ENCODE measurements at regions of chr2 and their contacts with region 1.

Region 1: DNA sequence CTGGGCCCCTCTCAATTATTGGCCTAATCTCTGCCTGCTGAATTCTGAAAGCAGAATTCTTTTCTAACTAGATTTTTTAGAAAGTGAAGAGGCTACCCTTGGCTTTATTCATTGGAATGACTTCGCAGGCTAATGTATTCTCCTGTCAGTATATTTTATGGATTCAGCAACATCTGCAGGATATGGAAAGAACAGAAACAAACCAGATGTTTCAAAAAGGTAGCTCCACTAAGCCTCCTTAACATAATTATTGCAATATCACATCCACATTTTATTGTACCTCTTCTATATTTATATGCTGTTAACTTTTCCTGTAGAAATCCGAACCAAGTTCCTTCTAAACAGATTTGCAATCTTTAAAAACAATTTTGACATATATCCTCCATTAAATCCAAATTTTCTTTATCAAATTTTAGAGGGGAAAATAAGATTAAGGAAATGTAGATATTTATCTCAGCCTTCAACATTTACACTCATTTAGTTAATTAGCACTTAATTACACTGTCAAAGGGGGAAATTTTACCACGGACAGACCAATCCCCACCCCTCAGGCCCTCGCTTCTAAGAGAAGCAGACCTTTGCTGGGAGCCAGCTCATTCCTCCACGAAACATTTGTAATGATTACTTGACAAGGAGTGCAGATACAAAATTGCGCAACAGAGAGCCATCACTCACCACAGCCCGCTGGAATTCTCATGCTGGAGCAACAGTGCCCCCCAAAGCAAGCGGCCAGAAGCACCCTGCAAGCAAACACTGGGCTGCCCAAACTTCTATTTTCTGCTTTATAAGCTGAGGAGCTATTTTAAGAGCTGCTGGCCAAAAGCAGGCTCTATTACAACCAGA is 253.4 kb downstream of the ETAA1 start:
- DNase-seq: peak; percentile 96
- H3K4me3 ChIP-seq: peak overlapping the region in 1 of 4 donors; percentile 0
- H3K27ac ChIP-seq: peak overlapping the region; percentile 75 to 81 (median 76)
- H3K4me1 ChIP-seq: peaks cover 21 to 45% (median 38%) of the 10 kb centered on the region in 4 donors
- H3K27me3 ChIP-seq: no peaks in the 10 kb centered on the region
- CTCF ChIP-seq: peak; percentile 78 to 82 (median 81)
- EP300 ChIP-seq: no peak
- POLR2A ChIP-seq: no peak

Region 2: DNA sequence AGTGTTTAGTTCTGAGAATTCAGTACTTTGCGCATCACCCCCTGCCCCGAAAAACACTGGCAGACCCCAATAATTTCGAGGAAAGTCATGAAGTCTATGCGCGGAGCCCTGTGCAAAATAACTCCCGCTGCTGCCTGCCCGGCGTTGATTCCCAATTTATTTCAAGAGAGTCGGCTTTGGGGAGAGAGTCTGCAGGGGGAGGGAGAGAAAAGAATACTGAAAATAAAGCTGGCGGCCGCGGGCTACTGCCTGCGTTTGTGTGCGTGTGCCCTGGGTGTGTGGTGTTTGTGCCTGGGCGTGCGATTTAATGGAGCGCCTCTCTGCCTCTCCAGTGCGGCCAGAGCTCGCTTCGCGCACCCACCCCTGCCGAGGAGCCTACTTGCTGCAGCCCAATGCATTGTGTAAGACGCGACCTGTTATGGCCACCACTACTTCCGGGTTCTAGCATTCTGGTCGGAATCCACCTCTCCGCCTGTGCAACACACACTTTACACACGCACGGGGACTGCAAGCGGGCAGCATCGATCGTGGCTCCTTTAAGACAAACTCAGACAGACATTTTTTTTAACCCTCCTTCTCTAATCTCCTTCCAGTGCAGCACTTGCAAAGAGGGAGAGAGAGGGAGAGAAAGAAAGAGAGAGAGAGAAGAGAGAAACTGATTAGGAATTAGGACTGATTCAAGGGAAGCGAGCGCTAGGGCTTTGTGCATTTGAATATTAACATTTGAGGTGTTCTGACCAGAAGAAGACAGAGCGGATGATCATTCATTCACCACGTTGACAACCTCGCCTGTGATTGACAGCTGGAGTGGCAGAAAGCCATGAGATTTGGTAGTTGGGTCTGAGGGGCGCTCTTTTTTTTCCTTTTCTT is 1215.6 kb before region 1 on chr2 and contains the start of gene MEIS1:
- intact Hi-C with region 1: loop called (anchors 5 kb)
- DNase-seq: peak; percentile 98
- H3K4me3 ChIP-seq: peak within 1 kb of the TSS; percentile 77 to 85 (median 80)
- H3K27ac ChIP-seq: peak within 1 kb of the TSS; percentile 86 to 98 (median 93)
- H3K4me1 ChIP-seq: peaks cover 0 to 31% (median 22%) of the 10 kb centered on the region in 4 donors
- H3K27me3 ChIP-seq: no peaks in the 10 kb centered on the region
- CTCF ChIP-seq: peak in 1 of 3 experiments; percentile 11
- EP300 ChIP-seq: no peak
- POLR2A ChIP-seq: peak; percentile 73
- total RNA-seq, gene MEIS1: 89.8 to 166 (median 132) TPM

Region 3: GRCh38 chr2:66699793-66700676 is 950.5 kb before region 1 on chr2:
- intact Hi-C with region 1: loop called (anchors 10 kb)
- DNase-seq: no peak
- H3K4me3 ChIP-seq: peak overlapping the region in 2 of 4 donors; percentile 6 to 8
- H3K27ac ChIP-seq: peak overlapping the region; percentile 78 to 85 (median 84)
- H3K4me1 ChIP-seq: peaks cover 0 to 75% (median 70%) of the 10 kb centered on the region in 4 donors
- H3K27me3 ChIP-seq: no peaks in the 10 kb centered on the region
- CTCF ChIP-seq: no peak
- EP300 ChIP-seq: no peak
- POLR2A ChIP-seq: no peak

Region 4: GRCh38 chr2:67397143-67397986 is 253.1 kb before region 1 on chr2 and contains the start of gene ETAA1:
- intact Hi-C with region 1: loop called (anchors 10 kb)
- DNase-seq: peak; percentile 97
- H3K4me3 ChIP-seq: peak within 1 kb of the TSS; percentile 70 to 98 (median 98)
- H3K27ac ChIP-seq: peak within 1 kb of the TSS; percentile 90 to 96 (median 93)
- H3K4me1 ChIP-seq: peaks cover 7 to 38% (median 32%) of the 10 kb centered on the region in 4 donors
- H3K27me3 ChIP-seq: no peaks in the 10 kb centered on the region
- CTCF ChIP-seq: no peak
- EP300 ChIP-seq: no peak
- POLR2A ChIP-seq: peak; percentile 74
- total RNA-seq, gene ETAA1: 10.4 to 19.5 (median 14.2) TPM

Region 5: DNA sequence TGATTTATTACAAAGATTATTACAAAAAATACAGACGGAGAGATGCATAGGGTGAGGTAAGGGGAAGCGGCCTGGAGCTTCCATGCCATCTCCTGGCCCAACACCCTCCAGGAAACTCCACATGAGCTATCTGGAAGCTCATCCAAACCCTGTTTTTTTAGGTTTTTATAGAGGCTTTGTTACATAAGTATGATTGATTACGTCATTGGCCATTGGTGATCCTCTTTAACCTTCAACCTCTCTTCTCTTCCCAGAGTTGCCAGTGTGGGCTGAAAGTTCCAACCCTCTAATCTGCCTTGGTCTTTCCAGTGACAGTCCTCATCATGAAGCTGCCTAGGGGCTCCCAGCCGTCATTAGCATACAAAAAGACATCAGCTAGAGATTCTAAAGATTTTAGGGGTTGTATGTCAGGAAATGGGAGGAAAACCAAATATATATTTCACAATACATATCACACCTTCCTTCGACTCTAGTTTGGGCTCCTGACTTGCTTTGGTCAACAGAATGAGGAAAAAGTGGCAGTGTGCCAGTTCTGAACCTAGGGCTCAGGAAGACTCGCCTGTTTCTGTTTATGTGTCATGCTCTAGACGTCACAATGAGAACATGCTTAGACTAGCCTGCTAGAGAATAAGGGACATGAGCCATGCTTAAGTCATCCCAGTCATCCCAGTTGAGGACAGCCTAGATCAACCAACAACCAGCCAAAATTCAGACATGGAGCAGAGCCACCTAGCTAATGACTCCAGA is 199.3 kb before region 1 on chr2:
- intact Hi-C with region 1: no loop called
- DNase-seq: no peak
- H3K4me3 ChIP-seq: no peak overlapping the region
- H3K27ac ChIP-seq: no peak overlapping the region
- H3K4me1 ChIP-seq: peaks cover 3 to 22% (median 13%) of the 10 kb centered on the region in 4 donors
- H3K27me3 ChIP-seq: no peaks in the 10 kb centered on the region
- CTCF ChIP-seq: no peak
- EP300 ChIP-seq: no peak
- POLR2A ChIP-seq: no peak

Region 6: GRCh38 chr2:67840460-67841068 is 190.1 kb after region 1 on chr2:
- intact Hi-C with region 1: loop called (anchors 5 kb)
- DNase-seq: no peak
- H3K4me3 ChIP-seq: no peak overlapping the region
- H3K27ac ChIP-seq: no peak overlapping the region
- H3K4me1 ChIP-seq: peaks cover 0 to 18% (median 14%) of the 10 kb centered on the region in 4 donors
- H3K27me3 ChIP-seq: no peaks in the 10 kb centered on the region
- CTCF ChIP-seq: peak; percentile 86
- EP300 ChIP-seq: no peak
- POLR2A ChIP-seq: no peak

Measured in esophagus muscularis mucosa (tissue), 4 donors.